ENCODE measurements at regions of chrX and their contacts with region 1.

Region 1: DNA sequence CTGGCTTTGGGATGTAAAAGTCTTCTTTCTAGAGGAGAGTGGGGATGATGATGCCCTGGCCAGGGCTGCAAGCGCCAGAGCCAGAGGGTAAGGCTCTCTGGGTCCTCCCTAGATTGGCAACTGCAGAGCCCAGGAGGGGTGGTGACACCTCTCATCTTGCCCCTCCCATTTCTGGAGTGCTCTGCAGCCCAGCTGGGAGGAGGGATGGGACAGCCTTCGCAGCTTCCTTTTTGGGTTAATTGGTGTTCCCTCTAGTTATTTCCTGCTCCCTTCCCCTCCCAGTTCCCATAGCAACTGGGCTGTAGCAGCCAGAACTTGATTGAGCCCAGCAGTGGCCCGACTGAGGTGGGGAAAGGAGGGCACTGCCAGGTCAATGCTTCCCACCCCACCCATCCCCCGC is 19.2 kb downstream of the NALF2 start:
- DNase-seq: no peak
- ATAC-seq: no peak
- H3K4me3 ChIP-seq: no peak overlapping the region
- H3K27ac ChIP-seq: no peak overlapping the region
- H3K4me1 ChIP-seq: no peaks in the 10 kb centered on the region
- H3K27me3 ChIP-seq: no peaks in the 10 kb centered on the region
- CTCF ChIP-seq: no peak

Region 2: GRCh38 chrX:69466546-69466945 is 56.8 kb before region 1 on chrX:
- intact Hi-C with region 1: loop called in 1 of 3 experiments (anchors 10 kb)
- DNase-seq: no peak
- ATAC-seq: no peak
- H3K4me3 ChIP-seq: no peak overlapping the region
- H3K27ac ChIP-seq: no peak overlapping the region
- H3K4me1 ChIP-seq: no peaks in the 10 kb centered on the region
- H3K27me3 ChIP-seq: peaks cover 0 to 21% (median 0%) of the 10 kb centered on the region in 4 donors
- CTCF ChIP-seq: no peak

Measured in pancreas (tissue), 10 donors.